ENCODE measurements at regions of chr1 and their contacts with region 1.

Region 1: DNA sequence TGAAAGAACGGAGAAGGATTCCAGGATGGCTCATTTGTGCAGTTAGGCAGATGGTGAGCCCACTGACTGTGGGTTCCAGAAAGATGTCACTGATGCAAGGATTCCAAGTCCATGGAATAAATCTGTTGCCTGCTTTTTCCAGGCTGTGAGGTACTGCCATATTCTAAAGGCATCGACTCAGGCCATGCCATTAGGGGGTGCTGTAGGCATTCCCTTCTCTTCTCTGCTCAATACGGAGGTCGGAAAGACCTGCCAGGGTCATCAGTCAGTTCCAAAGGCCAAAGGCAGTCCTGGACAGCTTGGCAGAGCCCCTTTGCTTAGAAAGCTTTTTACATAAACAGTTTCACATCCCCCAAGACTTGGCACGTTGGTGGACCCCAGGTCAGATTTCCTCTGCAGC is 31.7 kb upstream of the TMEM125 start:
- DNase-seq: peak in 8 of 10 donors; percentile 38 to 96 (median 74)

Region 2: DNA sequence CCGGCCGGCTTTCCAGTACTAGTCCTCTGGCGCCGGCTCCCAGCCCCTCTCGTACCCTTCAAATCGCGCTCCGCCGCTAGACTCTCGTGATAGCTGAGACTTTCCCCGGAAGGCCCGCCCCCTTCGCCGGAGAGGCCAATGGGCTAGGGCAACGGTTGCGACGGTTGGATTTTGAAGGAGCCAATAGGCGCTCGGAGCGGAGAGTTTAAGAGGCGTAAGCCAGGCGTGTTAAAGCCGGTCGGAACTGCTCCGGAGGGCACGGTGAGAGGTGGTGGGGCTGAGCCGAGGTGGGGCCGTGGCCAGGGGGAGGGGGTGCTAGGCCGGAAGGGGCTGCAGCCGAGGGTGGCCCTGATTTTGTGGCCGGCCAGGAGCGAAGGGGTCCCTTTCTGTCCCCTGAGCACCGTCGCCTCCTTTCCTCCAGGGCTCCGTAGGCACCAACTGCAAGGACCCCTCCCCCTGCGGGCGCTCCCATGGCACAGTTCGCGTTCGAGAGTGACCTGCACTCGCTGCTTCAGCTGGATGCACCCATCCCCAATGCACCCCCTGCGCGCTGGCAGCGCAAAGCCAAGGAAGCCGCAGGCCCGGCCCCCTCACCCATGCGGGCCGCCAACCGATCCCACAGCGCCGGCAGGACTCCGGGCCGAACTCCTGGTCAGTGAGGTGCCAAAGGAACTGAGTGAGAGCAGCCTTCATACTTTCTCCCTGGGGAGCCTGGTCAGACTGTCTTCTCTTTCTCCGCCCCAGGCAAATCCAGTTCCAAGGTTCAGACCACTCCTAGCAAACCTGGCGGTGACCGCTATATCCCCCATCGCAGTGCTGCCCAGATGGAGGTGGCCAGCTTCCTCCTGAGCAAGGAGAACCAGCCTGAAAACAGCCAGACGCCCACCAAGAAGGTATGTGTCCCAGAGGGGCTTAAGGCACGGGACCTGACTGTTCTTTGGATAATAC is 120.9 kb after region 1 on chr1 and contains the start of gene CDC20:
- intact Hi-C with region 1: loop called (anchors 2 kb)
- DNase-seq: peak; percentile 95 to 100 (median 98)

Region 3: DNA sequence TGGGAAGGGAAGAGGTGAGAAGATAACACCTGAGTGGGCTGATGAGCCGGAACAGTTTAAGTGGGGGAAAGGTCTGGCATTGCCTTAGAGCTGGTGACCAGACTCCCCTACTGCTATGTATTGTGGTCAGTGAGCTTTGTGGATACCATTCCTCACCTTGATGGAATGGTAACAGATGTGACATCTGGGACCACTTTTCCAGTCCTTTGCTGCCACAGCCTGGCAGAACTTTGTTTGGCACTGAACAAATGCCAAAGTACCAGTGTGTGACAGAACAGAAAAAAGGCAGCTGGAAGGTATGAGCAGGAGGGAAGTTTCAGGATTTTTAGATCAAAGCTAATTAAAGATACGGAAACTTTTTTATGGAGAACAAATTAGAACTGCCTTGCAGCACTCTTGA is 145.4 kb after region 1 on chr1:
- intact Hi-C with region 1: loop called (anchors 1 kb)
- DNase-seq: peak in 5 of 10 donors; percentile 47 to 92 (median 58)

Measured in posterior cingulate gyrus (tissue), 11 donors.